Heart left ventricle (tissue), 16 donors: ENCODE measurements at regions of chr18 and their contacts with region 1.

Region 1: DNA sequence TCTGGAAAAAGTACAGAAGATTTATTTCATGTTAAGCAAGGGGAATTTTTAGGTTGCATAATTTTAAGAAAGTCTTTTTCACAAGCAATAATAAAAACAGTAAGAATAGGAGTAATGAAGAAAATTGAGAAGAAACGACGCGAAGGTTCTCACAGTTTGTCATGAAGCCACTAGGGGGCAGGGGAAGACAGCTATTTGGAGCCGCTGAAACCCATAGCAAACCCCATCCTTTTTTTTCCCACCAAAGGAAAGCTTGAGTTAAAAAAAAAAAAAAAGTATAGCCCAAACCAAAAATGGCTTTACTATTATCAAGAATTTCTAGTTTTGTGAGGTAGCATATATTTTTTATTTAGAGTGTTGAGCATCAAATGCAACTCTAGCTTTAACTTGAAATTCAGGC is 300.9 kb downstream of the PHLPP1 start:
- DNase-seq: peak in 2 of 5 donors; percentile 38 to 42
- ATAC-seq: peak in 3 of 4 donors; percentile 58 to 72 (median 65)
- H3K4me3 ChIP-seq: no peak overlapping the region
- H3K27ac ChIP-seq: no peak overlapping the region
- H3K4me1 ChIP-seq: no peaks in the 10 kb centered on the region
- H3K27me3 ChIP-seq: peaks cover 0 to 9% (median 0%) of the 10 kb centered on the region in 9 donors
- CTCF ChIP-seq: peak; percentile 65 to 89 (median 82)
- POLR2A ChIP-seq: no peak

Region 2: GRCh38 chr18:63111671-63112402 is 95.6 kb after region 1 on chr18:
- intact Hi-C with region 1: loop called in 5 of 10 experiments (anchors 5 to 10 kb)
- DNase-seq: peak in 2 of 5 donors; percentile 53 to 54
- ATAC-seq: peak; percentile 77 to 93 (median 84)
- H3K4me3 ChIP-seq: no peak overlapping the region
- H3K27ac ChIP-seq: peak overlapping the region in 10 of 12 donors; percentile 31 to 80 (median 46)
- H3K4me1 ChIP-seq: peaks cover 0 to 19% (median 12%) of the 10 kb centered on the region in 12 donors
- H3K27me3 ChIP-seq: no peaks in the 10 kb centered on the region
- CTCF ChIP-seq: no peak
- POLR2A ChIP-seq: no peak

Region 3: GRCh38 chr18:63155169-63155852 is 139.0 kb after region 1 on chr18:
- intact Hi-C with region 1: loop called in 3 of 10 experiments (anchors 2 to 10 kb)
- DNase-seq: peak; percentile 58 to 74 (median 71)
- ATAC-seq: peak; percentile 64 to 91 (median 85)
- H3K4me3 ChIP-seq: peak overlapping the region in 9 of 12 donors; percentile 16 to 47 (median 40)
- H3K27ac ChIP-seq: peak overlapping the region in 2 of 12 donors; percentile 26 to 72
- H3K4me1 ChIP-seq: peaks cover 0 to 49% (median 6%) of the 10 kb centered on the region in 12 donors
- H3K27me3 ChIP-seq: no peaks in the 10 kb centered on the region
- CTCF ChIP-seq: peak; percentile 64 to 86 (median 74)
- POLR2A ChIP-seq: no peak

Region 4: GRCh38 chr18:63339920-63340484 is 323.7 kb after region 1 on chr18:
- intact Hi-C with region 1: loop called in 3 of 10 experiments (anchors 5 kb)
- DNase-seq: no peak
- ATAC-seq: no peak
- H3K4me3 ChIP-seq: no peak overlapping the region
- H3K27ac ChIP-seq: no peak overlapping the region
- H3K4me1 ChIP-seq: peaks cover 0 to 9% (median 0%) of the 10 kb centered on the region in 12 donors
- H3K27me3 ChIP-seq: no peaks in the 10 kb centered on the region
- CTCF ChIP-seq: peak; percentile 36 to 64 (median 47)
- POLR2A ChIP-seq: no peak

Region 5: GRCh38 chr18:63444567-63444966 is 428.3 kb after region 1 on chr18:
- intact Hi-C with region 1: loop called (anchors 2 to 5 kb)
- DNase-seq: no peak
- ATAC-seq: peak; percentile 19 to 88 (median 74)
- H3K4me3 ChIP-seq: no peak overlapping the region
- H3K27ac ChIP-seq: peak overlapping the region in 2 of 12 donors; percentile 63 to 81
- H3K4me1 ChIP-seq: peaks cover 0 to 16% (median 0%) of the 10 kb centered on the region in 12 donors
- H3K27me3 ChIP-seq: no peaks in the 10 kb centered on the region
- CTCF ChIP-seq: no peak
- POLR2A ChIP-seq: no peak